ENCODE measurements at regions of chr7 and their contacts with region 1.

Region 1: DNA sequence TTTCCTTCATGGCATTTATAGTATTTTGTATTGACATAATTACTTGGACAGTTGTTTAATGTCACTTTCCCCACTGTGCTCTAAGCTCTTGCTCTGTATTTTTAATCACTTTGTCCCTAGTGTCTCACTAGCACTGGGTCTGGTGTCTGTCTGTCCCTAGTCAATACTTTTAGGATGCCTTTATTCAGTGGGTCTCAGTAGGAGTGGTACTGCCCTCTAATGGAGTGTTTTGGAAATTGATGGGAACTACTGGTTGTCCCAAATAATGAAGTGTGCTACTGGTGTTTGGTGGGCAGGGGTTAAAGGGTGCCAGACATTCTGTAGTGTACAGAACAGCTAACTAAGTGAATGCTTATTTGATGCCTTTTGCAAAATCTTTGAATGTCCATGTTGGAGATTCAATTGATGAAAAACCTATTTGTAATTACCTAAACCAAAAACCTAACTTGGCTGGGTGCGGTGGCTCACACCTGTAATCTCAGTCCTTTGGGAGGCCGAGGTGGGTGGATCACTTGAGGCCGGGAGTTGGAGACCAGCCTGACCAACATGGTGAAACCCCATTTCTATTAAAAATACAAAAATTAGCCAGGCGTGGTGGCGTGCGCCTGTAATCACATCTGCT is 33.3 kb downstream of the CDK14 start:
- DNase-seq: no peak
- ATAC-seq: peak; percentile 84

Region 2: DNA sequence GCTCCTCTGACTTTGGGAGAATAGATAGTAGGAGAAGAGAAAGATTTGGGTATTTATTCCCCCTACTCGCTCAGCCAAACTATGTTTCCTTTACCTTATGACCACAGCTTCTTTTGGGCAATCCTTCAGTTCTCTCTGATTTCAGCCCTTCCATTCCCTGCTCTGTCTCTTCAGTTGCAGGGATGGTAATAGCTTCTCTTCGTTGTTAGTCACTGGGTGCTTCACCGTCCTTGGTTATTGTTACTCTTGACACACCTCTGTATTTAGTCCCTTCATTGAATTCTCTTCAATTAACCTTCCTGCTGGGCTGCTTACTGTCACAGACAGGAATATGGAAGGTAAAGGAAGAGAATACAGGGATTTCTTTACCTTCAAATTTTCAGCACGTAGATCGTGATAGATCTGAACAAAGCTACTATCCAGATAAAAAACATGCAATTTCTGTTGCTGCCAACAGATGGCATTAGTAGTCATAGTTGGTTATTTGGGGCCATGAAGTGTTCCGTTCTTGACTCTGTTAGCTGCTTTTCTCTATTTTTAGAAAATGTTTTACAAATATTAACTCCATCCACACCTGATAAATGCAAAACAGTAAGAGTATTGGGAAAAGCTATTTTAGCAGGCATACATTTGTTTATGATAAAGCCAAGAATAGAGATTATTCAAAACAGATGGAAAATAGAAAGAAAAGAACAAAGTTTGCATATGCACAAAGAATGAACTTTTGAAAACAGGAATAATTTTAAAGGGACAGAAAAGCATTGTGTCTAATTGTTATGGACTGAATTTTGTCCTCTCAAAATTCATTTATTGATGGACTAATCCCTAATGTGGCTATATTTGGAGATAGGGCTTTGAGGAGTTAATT is 174.0 kb before region 1 on chr7:
- intact Hi-C with region 1: loop called (anchors 10 kb)
- DNase-seq: no peak
- ATAC-seq: peak; percentile 90

Region 3: DNA sequence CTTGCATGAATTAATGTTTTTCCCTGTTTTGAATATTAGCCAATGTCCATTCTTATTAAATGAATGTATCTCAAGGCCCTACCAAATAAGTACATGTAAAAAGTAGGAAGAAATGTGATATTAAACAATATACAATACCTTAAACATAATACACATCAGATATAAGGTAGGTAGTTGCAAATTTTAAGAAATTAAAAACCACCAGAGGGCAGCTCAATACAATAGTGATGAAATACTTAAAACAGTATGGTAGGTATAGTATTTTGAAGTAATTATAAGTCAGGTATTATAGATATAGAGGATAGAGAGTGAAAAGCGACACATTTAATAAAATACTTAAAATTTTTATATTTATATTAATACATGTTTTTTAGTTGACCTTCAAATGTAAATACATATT is 76.9 kb before region 1 on chr7:
- intact Hi-C with region 1: loop called (anchors 5 kb)
- DNase-seq: no peak
- ATAC-seq: peak; percentile 48

Measured in Right ventricle myocardium superior (tissue), 1 donor.